CD4-positive, alpha-beta T cell (primary cell): ENCODE measurements at regions of chr9 and their contacts with region 1.

Region 1: DNA sequence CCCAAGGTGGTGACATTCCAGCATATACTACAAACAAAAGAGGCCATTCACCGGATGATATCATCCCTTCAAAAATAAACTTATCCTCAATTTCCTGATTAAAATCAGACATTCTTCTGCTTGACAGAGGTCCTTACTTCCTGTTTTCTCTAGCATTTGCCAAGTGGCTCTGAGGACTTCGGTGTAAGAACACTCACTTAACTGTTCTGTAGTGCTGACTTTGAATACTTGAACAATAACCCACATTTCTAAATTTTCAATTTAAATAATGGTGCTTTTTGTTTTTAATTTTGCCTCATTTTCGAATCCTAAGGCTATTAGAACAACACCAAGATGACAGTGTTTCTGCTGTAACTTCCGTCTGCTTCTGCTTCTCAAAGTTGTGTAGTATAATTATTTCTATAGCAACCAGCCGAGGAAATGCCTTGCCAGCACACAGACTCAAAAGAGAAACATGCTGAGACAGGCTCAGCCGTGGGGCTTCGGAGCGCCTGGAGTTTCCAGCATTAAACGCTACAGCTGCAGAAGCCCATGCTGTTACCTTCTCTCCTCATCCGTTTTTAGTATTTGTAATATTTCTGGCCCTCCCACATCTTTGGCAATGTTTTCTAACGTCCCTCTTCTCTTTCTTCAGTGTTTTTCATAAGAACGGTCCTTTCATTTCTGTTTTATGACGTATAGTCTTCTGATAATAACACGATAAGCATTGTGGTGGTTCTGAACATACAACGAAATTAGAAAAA is 19.5 kb upstream of the ANXA1 start:
- DNase-seq: peak; percentile 37 to 94 (median 70)
- ATAC-seq: peak; percentile 90
- H3K4me3 ChIP-seq: peak overlapping the region; percentile 72
- H3K4me3 Mint-ChIP-seq: peak overlapping the region; percentile 86
- H3K27ac ChIP-seq: peak overlapping the region; percentile 71 to 97
- H3K27ac Mint-ChIP-seq: peak overlapping the region; percentile 88
- H3K4me1 ChIP-seq: peaks cover 3% of the 10 kb centered on the region
- H3K4me1 Mint-ChIP-seq: peaks cover 35% of the 10 kb centered on the region
- H3K27me3 ChIP-seq: no peaks in the 10 kb centered on the region
- H3K27me3 Mint-ChIP-seq: no peaks in the 10 kb centered on the region
- CTCF ChIP-seq: no peak

Region 2: GRCh38 chr9:72364679-72365524 is 767.3 kb before region 1 on chr9 and contains the start of gene ZFAND5:
- CTCF ChIA-PET with region 1: no interaction called
- POLR2A ChIA-PET with region 1: interaction called, 6 read pairs
- intact Hi-C with region 1: loop called in 1 of 2 experiments (anchors 10 kb)
- DNase-seq: peak; percentile 87 to 99 (median 92)
- ATAC-seq: peak; percentile 77
- H3K4me3 ChIP-seq: peak within 1 kb of the TSS; percentile 90
- H3K4me3 Mint-ChIP-seq: peak within 1 kb of the TSS; percentile 99
- H3K27ac ChIP-seq: peak within 1 kb of the TSS; percentile 97 to 99
- H3K27ac Mint-ChIP-seq: peak within 1 kb of the TSS; percentile 99
- H3K4me1 ChIP-seq: peaks cover 16% of the 10 kb centered on the region
- H3K4me1 Mint-ChIP-seq: peaks cover 51% of the 10 kb centered on the region
- H3K27me3 ChIP-seq: no peaks in the 10 kb centered on the region
- H3K27me3 Mint-ChIP-seq: no peaks in the 10 kb centered on the region
- CTCF ChIP-seq: no peak
- total RNA-seq, gene ZFAND5: 368 TPM

Region 3: DNA sequence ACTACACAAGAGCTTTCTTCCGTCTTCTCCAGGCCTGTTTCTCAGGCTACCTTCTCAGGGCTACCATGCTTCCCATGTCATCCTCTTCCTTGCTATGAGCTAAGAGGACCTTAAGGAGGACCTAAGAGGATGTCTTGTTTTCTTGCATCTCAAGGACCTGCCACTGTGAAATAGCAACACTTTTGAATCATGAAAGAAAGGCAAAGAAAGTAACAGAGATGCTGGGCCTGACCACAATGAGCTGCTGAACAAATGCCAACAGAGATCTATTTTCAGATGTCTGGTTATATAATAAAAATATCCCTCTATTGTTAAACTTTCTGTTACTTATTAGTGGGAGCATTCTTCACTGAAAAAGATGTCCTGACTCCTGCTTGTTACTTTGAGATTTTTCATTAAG is 17.2 kb before region 1 on chr9:
- CTCF ChIA-PET with region 1: interaction called, 3 read pairs
- POLR2A ChIA-PET with region 1: interaction called, 5 read pairs
- intact Hi-C with region 1: loop called in 1 of 2 experiments (anchors 2 kb)
- DNase-seq: no peak
- ATAC-seq: peak; percentile 55
- H3K4me3 ChIP-seq: no peak overlapping the region
- H3K4me3 Mint-ChIP-seq: peak overlapping the region; percentile 22
- H3K27ac ChIP-seq: no peak overlapping the region
- H3K27ac Mint-ChIP-seq: peak overlapping the region; percentile 48
- H3K4me1 ChIP-seq: peaks cover 8% of the 10 kb centered on the region
- H3K4me1 Mint-ChIP-seq: peaks cover 58% of the 10 kb centered on the region
- H3K27me3 ChIP-seq: no peaks in the 10 kb centered on the region
- H3K27me3 Mint-ChIP-seq: no peaks in the 10 kb centered on the region
- CTCF ChIP-seq: no peak

Region 4: GRCh38 chr9:73149371-73150067 is 17.3 kb after region 1 on chr9:
- CTCF ChIA-PET with region 1: interaction called, 16 read pairs
- POLR2A ChIA-PET with region 1: interaction called, 22 read pairs
- intact Hi-C with region 1: loop called in 1 of 2 experiments (anchors 1 kb)
- DNase-seq: peak in 4 of 14 experiments; percentile 16 to 78 (median 69)
- ATAC-seq: peak; percentile 48
- H3K4me3 ChIP-seq: peak overlapping the region; percentile 9
- H3K4me3 Mint-ChIP-seq: peak overlapping the region; percentile 67
- H3K27ac ChIP-seq: no peak overlapping the region
- H3K27ac Mint-ChIP-seq: peak overlapping the region; percentile 71
- H3K4me1 ChIP-seq: peaks cover 9% of the 10 kb centered on the region
- H3K4me1 Mint-ChIP-seq: peaks cover 66% of the 10 kb centered on the region
- H3K27me3 ChIP-seq: no peaks in the 10 kb centered on the region
- H3K27me3 Mint-ChIP-seq: no peaks in the 10 kb centered on the region
- CTCF ChIP-seq: no peak

Region 5: DNA sequence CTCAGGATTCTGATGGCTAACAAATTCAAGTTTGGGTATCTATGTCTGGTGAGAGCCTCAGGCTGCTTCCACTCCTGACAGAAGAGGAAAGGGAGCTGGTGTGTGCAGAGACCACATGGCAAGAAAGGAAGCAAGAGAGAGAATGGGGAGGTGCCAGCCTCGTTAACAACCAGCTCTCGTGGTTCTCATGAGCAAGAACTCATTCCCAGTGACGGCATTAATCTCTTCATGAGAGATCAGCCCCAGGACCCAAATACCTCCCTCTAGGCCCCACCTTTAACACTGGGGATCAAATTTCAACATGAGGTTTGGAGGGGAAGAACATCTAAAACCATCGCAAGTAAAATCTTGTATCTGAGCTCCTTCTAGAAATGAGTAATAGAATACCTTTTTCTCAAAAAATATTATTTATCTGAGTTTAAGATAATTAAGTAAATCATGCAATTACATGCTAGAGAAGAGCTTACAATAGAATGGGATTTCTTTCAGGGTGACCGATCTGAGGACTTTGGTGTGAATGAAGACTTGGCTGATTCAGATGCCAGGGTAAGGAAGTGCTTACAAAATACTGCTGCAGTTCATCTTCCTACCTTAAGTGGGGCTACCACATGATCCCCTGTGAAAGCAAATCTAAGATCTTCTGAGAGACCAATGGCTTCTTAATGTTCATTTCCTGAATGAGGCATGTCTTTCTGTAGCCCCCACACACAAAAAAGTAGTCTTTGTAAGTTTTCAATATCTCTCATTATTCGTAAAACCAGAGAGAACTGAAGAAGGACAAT is 31.0 kb after region 1 on chr9:
- CTCF ChIA-PET with region 1: interaction called, 4 read pairs
- POLR2A ChIA-PET with region 1: no interaction called
- intact Hi-C with region 1: loop called (anchors 5 kb)
- DNase-seq: peak in 2 of 14 experiments; percentile 30 to 33
- ATAC-seq: peak; percentile 37
- H3K4me3 ChIP-seq: no peak overlapping the region
- H3K4me3 Mint-ChIP-seq: no peak overlapping the region
- H3K27ac ChIP-seq: no peak overlapping the region
- H3K27ac Mint-ChIP-seq: peak overlapping the region; percentile 74
- H3K4me1 ChIP-seq: peaks cover 7% of the 10 kb centered on the region
- H3K4me1 Mint-ChIP-seq: peaks cover 32% of the 10 kb centered on the region
- H3K27me3 ChIP-seq: no peaks in the 10 kb centered on the region
- H3K27me3 Mint-ChIP-seq: no peaks in the 10 kb centered on the region
- CTCF ChIP-seq: no peak

Region 6: DNA sequence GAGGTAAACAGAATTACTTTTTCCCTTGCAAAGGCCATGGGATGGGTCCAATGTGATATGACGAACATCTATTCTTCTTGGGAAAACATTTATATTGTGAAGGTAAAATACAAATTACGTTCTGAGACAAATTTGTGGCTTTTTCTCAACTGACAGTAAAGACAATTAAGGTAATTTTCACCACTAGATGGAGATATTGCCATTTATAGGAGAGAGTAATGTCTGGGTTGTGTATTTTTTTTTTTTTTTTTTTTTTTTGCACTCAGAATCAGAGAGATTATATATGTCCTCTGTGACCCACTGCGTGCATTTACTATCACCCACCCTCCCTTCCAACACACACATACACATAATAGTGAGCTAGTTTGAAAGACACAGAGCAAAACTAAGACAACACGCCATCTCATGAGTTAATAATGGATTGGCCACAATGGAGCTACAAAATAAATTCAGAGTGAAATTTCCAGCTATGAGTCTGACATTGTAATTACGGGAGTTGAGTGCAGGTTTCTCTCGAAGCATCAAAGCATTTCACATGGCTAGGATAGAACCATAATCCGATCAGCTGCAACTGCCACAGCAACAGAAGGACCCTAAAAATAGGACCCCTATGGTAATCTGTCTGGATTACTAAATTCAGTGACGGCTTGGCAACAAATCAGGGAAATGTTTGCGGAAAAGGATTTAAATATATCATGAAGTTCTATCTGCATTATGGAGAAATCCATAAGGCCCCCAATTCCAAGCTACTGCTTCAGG is 68.7 kb after region 1 on chr9:
- CTCF ChIA-PET with region 1: no interaction called
- POLR2A ChIA-PET with region 1: no interaction called
- intact Hi-C with region 1: no loop called
- DNase-seq: peak in 3 of 14 experiments; percentile 39 to 46 (median 45)
- ATAC-seq: no peak
- H3K4me3 ChIP-seq: no peak overlapping the region
- H3K4me3 Mint-ChIP-seq: no peak overlapping the region
- H3K27ac ChIP-seq: no peak overlapping the region
- H3K27ac Mint-ChIP-seq: no peak overlapping the region
- H3K4me1 ChIP-seq: no peaks in the 10 kb centered on the region
- H3K4me1 Mint-ChIP-seq: no peaks in the 10 kb centered on the region
- H3K27me3 ChIP-seq: peaks cover 0 to 10% of the 10 kb centered on the region in 2 experiments
- H3K27me3 Mint-ChIP-seq: peaks cover 25% of the 10 kb centered on the region
- CTCF ChIP-seq: peak; percentile 64